ENCODE measurements at regions of chr1 and their contacts with region 1.

Region 1: GRCh38 chr1:45230540-45230939 is 24.1 kb upstream of the ZSWIM5 start:
- DNase-seq: peak in 3 of 9 experiments; percentile 12 to 53 (median 45)
- ATAC-seq: no peak
- H3K4me3 ChIP-seq: no peak overlapping the region
- H3K4me3 Mint-ChIP-seq: no peak overlapping the region
- H3K27ac ChIP-seq: no peak overlapping the region
- H3K27ac Mint-ChIP-seq: no peak overlapping the region
- H3K4me1 ChIP-seq: no peaks in the 10 kb centered on the region
- H3K4me1 Mint-ChIP-seq: no peaks in the 10 kb centered on the region
- H3K27me3 ChIP-seq: no peaks in the 10 kb centered on the region
- H3K27me3 Mint-ChIP-seq: no peaks in the 10 kb centered on the region
- CTCF ChIP-seq: no peak

Region 2: DNA sequence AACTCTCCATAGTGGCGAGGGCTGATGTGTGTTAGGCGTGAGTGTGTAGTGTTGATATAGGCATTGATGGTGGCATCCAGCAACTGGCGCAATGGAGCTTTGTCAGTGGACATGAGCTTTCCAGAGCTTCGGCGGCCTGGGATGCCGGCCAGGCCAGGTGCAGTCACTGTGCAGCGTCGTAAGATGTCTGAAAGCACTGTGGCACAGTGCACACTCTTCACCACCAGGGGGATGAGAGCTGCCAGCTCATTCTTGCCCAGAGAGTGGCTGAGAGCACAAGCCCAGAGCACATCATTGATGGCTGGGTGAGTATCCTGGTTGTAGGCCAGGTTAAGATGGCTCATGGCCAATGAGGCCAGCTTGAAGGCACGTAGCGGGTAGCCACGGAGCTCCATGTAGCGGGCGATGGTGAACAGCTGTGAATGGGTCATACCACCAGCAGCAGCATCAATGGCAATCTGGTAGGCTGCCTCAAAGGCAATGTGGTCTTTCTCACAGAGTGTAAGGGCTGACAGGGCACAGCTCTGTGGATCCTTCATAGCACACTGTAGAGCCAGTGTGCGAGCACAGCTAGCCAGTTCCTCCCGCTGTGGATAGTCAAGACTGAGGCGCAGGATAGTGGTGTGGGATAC is 211.8 kb before region 1 on chr1:
- CTCF ChIA-PET with region 1: interaction called, 5 read pairs
- POLR2A ChIA-PET with region 1: no interaction called
- intact Hi-C with region 1: loop called (anchors 1 kb)
- DNase-seq: peak; percentile 26 to 72 (median 58)
- ATAC-seq: peak; percentile 85
- H3K4me3 ChIP-seq: no peak overlapping the region
- H3K4me3 Mint-ChIP-seq: no peak overlapping the region
- H3K27ac ChIP-seq: no peak overlapping the region
- H3K27ac Mint-ChIP-seq: no peak overlapping the region
- H3K4me1 ChIP-seq: peaks cover 3% of the 10 kb centered on the region
- H3K4me1 Mint-ChIP-seq: peaks cover 12% of the 10 kb centered on the region
- H3K27me3 ChIP-seq: no peaks in the 10 kb centered on the region
- H3K27me3 Mint-ChIP-seq: no peaks in the 10 kb centered on the region
- CTCF ChIP-seq: peak; percentile 59

Region 3: DNA sequence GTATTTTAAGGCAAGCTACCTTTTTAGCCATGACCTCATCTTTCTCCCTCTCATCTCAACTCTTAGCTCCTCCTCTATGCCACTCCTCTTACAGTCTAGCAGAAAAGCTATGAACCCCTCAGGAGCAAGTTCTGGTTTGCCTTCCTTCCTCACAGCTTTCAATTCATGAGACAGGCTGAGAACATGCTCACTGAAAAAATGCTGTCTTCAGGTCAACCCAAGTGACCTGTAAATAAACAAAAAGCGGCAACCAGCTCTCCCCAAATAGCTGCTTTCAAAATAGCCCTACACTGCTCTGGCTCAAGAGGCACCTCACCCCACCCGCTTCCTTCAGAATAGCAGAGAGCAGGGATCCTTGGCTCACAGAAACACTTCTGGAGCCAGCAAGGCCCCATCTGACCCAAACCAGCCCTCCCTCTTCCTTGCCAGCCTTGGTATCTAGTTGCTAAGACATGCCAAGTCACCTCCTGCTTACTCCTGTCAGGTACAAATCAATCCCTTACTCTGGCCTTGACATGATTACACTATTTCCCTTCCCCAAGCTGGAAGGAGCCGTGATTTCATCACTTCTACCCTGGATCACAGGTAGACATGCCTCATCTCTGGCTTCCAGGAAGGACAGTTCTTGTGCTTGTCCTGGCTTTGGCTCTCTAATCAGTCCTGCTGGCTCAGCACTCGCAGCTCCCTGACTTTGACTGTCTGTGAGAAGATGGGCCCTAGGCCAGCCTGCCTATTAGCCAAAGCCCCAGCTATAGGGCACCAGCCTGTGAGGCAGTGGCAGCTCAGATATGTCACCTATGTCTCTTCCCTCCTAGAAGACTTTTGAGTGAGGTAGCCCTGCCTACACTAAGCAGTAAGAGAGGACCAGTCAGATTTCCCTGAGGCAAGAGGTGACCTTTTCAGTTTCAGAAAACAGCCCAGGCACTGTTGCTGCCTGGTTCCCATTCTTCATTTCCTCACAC is 118.5 kb after region 1 on chr1:
- CTCF ChIA-PET with region 1: no interaction called
- POLR2A ChIA-PET with region 1: no interaction called
- intact Hi-C with region 1: no loop called
- DNase-seq: no peak
- ATAC-seq: no peak
- H3K4me3 ChIP-seq: no peak overlapping the region
- H3K4me3 Mint-ChIP-seq: no peak overlapping the region
- H3K27ac ChIP-seq: no peak overlapping the region
- H3K27ac Mint-ChIP-seq: no peak overlapping the region
- H3K4me1 ChIP-seq: no peaks in the 10 kb centered on the region
- H3K4me1 Mint-ChIP-seq: peaks cover 3% of the 10 kb centered on the region
- H3K27me3 ChIP-seq: no peaks in the 10 kb centered on the region
- H3K27me3 Mint-ChIP-seq: no peaks in the 10 kb centered on the region
- CTCF ChIP-seq: no peak

Measured in CD8-positive, alpha-beta T cell (primary cell).